ENCODE measurements at regions of chr4 and their contacts with region 1.

Region 1: DNA sequence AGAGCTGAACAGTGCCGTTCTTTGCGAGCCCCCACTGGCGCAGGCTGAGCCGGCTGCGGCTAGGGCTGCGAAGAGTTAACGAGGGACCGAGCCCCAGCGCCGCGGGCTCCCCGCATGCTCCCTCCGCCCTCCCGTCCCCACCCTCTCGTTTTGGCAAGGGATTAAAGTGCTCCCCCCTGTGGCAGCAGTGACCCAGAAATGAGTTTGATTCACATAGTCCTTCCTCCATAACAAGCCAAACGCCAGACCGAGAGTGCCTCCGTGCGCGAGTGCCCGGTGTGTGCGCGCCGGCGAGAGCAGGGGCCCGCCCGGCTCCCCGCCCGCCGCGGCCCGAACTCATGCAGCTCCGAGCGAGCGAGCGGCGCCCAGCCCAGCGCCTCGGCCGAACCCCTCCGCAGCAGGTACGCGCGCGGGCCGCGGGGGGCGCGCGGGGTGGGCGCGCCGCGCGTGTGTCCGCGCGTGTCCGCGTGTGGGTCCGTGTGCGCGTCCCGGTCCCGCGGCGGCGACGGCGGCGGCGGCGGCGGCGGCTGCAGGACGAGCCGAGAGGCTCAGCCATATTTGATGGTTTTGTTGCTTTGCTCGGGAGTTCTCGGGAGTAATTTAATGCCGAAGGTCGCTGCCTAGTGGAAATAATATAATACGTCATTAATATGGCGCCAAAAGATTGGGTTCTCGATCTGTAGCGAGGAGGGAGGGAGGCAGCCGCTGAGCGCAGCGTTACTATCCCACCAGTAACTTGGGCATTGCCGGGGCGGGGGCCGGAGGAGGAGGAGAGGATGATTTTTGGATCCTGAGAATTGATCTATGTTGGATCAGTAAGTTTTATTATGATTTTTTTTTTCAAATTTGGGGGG is at the start of gene JADE1:
- DNase-seq: peak; percentile 93 to 98 (median 95)
- H3K4me3 ChIP-seq: peak within 1 kb of the TSS; percentile 67 to 98 (median 92)
- H3K27ac ChIP-seq: peak within 1 kb of the TSS; percentile 94 to 98 (median 96)
- H3K4me1 ChIP-seq: peaks cover 2 to 12% of the 10 kb centered on the region in 2 donors
- H3K27me3 ChIP-seq: no peaks in the 10 kb centered on the region
- CTCF ChIP-seq: peak; percentile 35 to 77 (median 62)
- POLR2A ChIP-seq: peak; percentile 83 to 93
- total RNA-seq, gene JADE1: 25.9 to 66.7 (median 39.9) TPM

Region 2: GRCh38 chr4:128454281-128455075 is 355.2 kb before region 1 on chr4:
- intact Hi-C with region 1: loop called (anchors 5 to 10 kb)
- DNase-seq: peak; percentile 78 to 95 (median 89)
- H3K4me3 ChIP-seq: no peak overlapping the region
- H3K27ac ChIP-seq: peak overlapping the region in 2 of 5 donors; percentile 3 to 68
- H3K4me1 ChIP-seq: peaks cover 0 to 22% of the 10 kb centered on the region in 2 donors
- H3K27me3 ChIP-seq: no peaks in the 10 kb centered on the region
- CTCF ChIP-seq: peak; percentile 66 to 90 (median 86)
- POLR2A ChIP-seq: no peak

Region 3: DNA sequence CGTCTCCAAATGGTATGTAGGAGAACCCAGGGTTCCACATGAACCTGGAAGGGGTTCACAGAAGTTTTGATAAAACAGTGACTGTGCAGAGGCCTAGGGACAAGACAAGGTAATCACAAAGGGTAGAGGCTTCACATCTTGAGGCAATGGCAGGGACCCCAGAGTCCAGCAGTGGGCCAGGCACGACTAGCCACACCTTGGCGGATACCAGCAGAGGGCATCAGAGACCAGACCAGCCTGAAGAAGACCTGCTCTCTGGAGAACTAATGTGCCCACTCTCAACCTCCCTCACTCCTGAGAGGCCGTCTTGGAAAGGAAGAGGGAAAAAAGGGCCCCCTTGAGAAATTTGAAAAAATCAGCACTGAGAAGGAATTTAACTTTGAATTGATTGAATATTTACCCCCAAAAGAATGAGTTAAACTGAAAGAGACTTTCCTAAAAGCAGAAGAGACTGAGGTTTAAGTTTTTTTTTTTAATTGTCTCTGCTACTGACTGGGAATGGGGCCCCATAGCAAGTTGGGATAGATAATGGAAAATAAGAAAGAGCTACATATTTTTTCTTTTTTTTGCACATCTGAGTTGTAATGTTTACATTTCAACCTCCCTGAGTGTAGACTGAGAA is 244.0 kb before region 1 on chr4:
- intact Hi-C with region 1: loop called (anchors 5 to 10 kb)
- DNase-seq: peak; percentile 50 to 83 (median 60)
- H3K4me3 ChIP-seq: no peak overlapping the region
- H3K27ac ChIP-seq: no peak overlapping the region
- H3K4me1 ChIP-seq: peaks cover 12 to 15% of the 10 kb centered on the region in 2 donors
- H3K27me3 ChIP-seq: no peaks in the 10 kb centered on the region
- CTCF ChIP-seq: peak; percentile 47 to 75 (median 60)
- POLR2A ChIP-seq: no peak

Region 4: DNA sequence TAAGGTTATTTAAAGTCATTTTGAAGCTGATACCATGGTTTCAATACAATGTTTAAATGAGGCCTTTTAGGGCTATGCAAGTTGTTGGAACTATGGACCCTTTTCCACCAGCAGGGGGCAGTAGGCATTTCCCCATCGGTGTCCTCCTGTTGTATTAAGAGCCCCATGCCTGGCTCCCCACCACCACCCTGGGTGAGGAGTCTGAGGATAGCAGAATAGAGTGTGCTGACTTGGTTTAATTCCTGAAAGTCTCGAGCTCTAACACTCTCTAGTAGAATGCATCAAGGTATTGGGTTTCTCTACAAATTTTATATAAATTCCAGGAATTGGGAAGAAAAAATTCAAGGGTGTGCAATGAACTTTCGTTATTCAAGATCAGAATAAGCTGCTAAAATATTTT is 235.0 kb before region 1 on chr4:
- intact Hi-C with region 1: loop called (anchors 5 to 10 kb)
- DNase-seq: peak; percentile 73 to 91 (median 81)
- H3K4me3 ChIP-seq: no peak overlapping the region
- H3K27ac ChIP-seq: no peak overlapping the region
- H3K4me1 ChIP-seq: peaks cover 13 to 42% of the 10 kb centered on the region in 2 donors
- H3K27me3 ChIP-seq: no peaks in the 10 kb centered on the region
- CTCF ChIP-seq: peak; percentile 31 to 65 (median 58)
- POLR2A ChIP-seq: no peak

Measured in adrenal gland (tissue), 19 donors.